CD8-positive, alpha-beta memory T cell (primary cell): ENCODE measurements at regions of chr3 and their contacts with region 1.

Region 1: DNA sequence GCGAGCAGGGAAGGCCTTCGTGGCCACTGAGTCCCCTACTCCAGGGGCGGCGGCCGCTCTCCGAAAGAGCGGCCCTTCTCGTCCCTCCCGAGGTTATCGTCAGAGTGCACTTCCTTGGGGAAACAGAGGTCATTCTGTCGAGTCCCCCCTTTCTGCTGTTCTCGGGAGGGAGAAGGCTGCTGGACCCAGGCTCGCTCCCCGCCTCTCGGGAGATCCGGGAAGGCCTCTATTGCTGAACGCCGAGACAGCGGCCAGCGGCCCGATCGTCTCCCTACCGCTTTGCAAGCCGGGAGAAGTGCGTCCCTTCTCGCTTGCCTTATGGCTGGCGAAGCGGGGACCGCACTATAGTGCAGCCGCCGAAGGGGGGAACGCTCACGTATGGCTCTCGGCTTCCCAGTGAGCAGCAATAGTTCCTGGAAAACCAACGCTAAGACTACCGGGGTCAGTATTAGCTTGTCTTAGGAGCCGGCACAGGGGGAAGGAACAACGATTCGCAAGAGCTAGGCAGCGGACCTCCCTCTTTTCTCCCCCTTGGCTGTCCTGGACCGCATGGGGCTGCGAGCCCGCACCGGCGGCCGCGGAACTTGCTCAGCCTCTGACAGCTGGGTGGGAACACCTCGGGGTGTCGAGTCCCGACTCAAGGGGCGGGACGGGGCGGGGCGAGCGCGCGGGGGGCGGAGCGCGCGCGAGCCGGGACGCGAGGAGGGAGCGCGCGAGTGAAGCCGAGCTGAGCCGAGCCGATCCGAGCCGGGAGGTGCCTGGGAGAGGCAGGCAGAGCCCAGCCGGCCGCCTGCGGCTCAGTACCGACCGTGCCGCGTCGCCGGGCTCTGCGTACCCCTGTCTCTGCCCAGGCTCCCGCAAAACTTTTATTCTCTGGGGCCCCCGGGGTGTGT is 930 bp upstream of the PPM1L start:
- DNase-seq: peak; percentile 84 to 92 (median 86)
- H3K4me3 ChIP-seq: peak overlapping the region; percentile 88
- H3K4me3 Mint-ChIP-seq: peak overlapping the region; percentile 93 to 97 (median 96)
- H3K27ac ChIP-seq: peak overlapping the region; percentile 72
- H3K27ac Mint-ChIP-seq: peak overlapping the region; percentile 88 to 97 (median 94)
- H3K4me1 ChIP-seq: peaks cover 21% of the 10 kb centered on the region
- H3K4me1 Mint-ChIP-seq: peaks cover 28 to 46% (median 34%) of the 10 kb centered on the region in 3 donors
- H3K27me3 ChIP-seq: peaks cover 5% of the 10 kb centered on the region
- H3K27me3 Mint-ChIP-seq: peaks cover 3 to 4% of the 10 kb centered on the region in 2 donors

Region 2: GRCh38 chr3:160449636-160450598 is 305.2 kb before region 1 on chr3 and contains the start of gene TRIM59:
- CTCF ChIA-PET with region 1: no interaction called
- POLR2A ChIA-PET with region 1: interaction called, 10 read pairs
- DNase-seq: peak; percentile 93 to 97 (median 97)
- H3K4me3 ChIP-seq: peak within 1 kb of the TSS; percentile 89
- H3K4me3 Mint-ChIP-seq: peak within 1 kb of the TSS; percentile 95 to 100 (median 98)
- H3K27ac ChIP-seq: peak within 1 kb of the TSS; percentile 87
- H3K27ac Mint-ChIP-seq: peak within 1 kb of the TSS; percentile 86 to 99 (median 97)
- H3K4me1 ChIP-seq: peaks cover 18% of the 10 kb centered on the region
- H3K4me1 Mint-ChIP-seq: peaks cover 29 to 54% (median 52%) of the 10 kb centered on the region in 3 donors
- H3K27me3 ChIP-seq: no peaks in the 10 kb centered on the region
- H3K27me3 Mint-ChIP-seq: no peaks in the 10 kb centered on the region
- total RNA-seq, gene TRIM59: 30.7 to 31.4 TPM

Region 3: GRCh38 chr3:160565442-160566403 is 189.4 kb before region 1 on chr3 and contains the start of gene KPNA4:
- CTCF ChIA-PET with region 1: interaction called, 3 read pairs
- POLR2A ChIA-PET with region 1: interaction called, 10 read pairs
- DNase-seq: peak; percentile 94 to 98 (median 97)
- H3K4me3 ChIP-seq: peak within 1 kb of the TSS; percentile 69
- H3K4me3 Mint-ChIP-seq: peak within 1 kb of the TSS; percentile 92 to 97 (median 96)
- H3K27ac ChIP-seq: peak within 1 kb of the TSS; percentile 85
- H3K27ac Mint-ChIP-seq: peak within 1 kb of the TSS; percentile 91 to 98 (median 96)
- H3K4me1 ChIP-seq: peaks cover 51% of the 10 kb centered on the region
- H3K4me1 Mint-ChIP-seq: peaks cover 53 to 63% (median 56%) of the 10 kb centered on the region in 3 donors
- H3K27me3 ChIP-seq: no peaks in the 10 kb centered on the region
- H3K27me3 Mint-ChIP-seq: no peaks in the 10 kb centered on the region
- total RNA-seq, gene KPNA4: 72.7 to 86.5 TPM